ENCODE measurements at regions of chr2 and their contacts with region 1.

Region 1: DNA sequence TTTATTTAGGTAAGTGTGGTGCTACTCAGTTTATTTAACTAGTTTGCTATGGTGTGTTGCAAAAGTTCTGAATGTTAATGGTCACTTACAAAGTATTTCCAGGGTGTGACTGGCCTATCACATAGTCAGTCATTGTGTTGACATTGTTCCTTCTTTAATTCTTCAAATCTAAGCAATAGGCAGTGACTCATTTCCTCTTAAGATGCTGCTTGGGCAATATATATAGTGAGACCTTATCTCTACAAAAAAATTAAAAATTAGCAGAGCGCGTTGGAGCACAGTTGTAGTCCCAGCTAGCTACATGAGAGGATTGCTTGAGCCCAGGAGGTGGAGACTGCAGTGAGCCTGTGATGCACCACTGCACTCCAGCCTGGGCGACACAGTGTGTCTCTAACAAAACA is 5.8 kb upstream of the CCDC88A start:
- DNase-seq: peak; percentile 58
- H3K4me3 Mint-ChIP-seq: peak overlapping the region; percentile 45
- H3K27ac Mint-ChIP-seq: peak overlapping the region; percentile 87
- H3K4me1 Mint-ChIP-seq: peaks cover 45% of the 10 kb centered on the region
- H3K27me3 Mint-ChIP-seq: no peaks in the 10 kb centered on the region
- CTCF ChIP-seq: no peak

Region 2: DNA sequence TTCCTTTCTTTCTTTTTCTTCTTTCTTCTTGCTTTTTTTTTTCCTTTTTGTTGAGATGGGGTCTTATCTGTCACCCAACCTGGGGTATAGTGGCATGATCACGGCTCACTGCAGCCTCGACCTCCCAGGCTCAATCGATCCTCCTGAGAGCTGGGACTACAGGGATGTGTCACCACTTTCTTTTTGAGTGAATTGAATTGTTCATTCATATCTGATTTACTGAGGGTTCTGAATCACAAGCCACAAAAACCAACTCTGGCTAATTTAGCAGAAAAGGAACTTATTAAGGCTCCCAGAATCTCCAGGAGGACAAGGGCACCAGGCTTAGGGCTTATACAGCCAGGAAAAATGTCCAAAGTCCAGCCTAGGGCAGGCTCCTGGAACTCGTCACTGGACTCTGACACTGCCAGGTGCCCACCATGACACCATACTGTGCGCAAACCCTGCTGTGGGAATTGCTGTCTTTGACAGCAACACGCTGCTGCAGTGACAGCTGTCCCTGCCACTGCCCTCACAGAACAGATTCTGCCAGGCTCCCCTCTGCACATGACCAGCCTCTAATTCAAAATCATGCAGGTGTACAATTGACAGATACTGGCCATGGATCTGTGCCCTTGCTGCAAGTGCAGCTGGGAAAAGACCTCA is 744.9 kb before region 1 on chr2:
- CTCF ChIA-PET with region 1: no interaction called
- intact Hi-C with region 1: no loop called
- DNase-seq: no peak
- H3K4me3 Mint-ChIP-seq: no peak overlapping the region
- H3K27ac Mint-ChIP-seq: no peak overlapping the region
- H3K4me1 Mint-ChIP-seq: peaks cover 15% of the 10 kb centered on the region
- H3K27me3 Mint-ChIP-seq: no peaks in the 10 kb centered on the region
- CTCF ChIP-seq: no peak

Region 3: GRCh38 chr2:55511508-55512124 is 86.2 kb after region 1 on chr2:
- CTCF ChIA-PET with region 1: no interaction called
- intact Hi-C with region 1: loop called (anchors 1 kb)
- DNase-seq: peak; percentile 45
- H3K4me3 Mint-ChIP-seq: no peak overlapping the region
- H3K27ac Mint-ChIP-seq: no peak overlapping the region
- H3K4me1 Mint-ChIP-seq: no peaks in the 10 kb centered on the region
- H3K27me3 Mint-ChIP-seq: no peaks in the 10 kb centered on the region
- CTCF ChIP-seq: peak; percentile 14